ENCODE measurements at regions of chr10 and their contacts with region 1.

Region 1: GRCh38 chr10:4059471-4060138 is 274.6 kb upstream of the KLF6 start:
- DNase-seq: no peak
- ATAC-seq: no peak
- H3K4me3 ChIP-seq: no peak overlapping the region
- H3K27ac ChIP-seq: no peak overlapping the region
- H3K4me1 ChIP-seq: peaks cover 17% of the 10 kb centered on the region
- H3K27me3 ChIP-seq: no peaks in the 10 kb centered on the region
- CTCF ChIP-seq: no peak

Region 2: GRCh38 chr10:4111643-4112042 is 52.0 kb after region 1 on chr10:
- CTCF ChIA-PET with region 1: no interaction called
- POLR2A ChIA-PET with region 1: no interaction called
- intact Hi-C with region 1: loop called (anchors 2 kb)
- DNase-seq: peak; percentile 30
- ATAC-seq: peak; percentile 58
- H3K4me3 ChIP-seq: no peak overlapping the region
- H3K27ac ChIP-seq: no peak overlapping the region
- H3K4me1 ChIP-seq: no peaks in the 10 kb centered on the region
- H3K27me3 ChIP-seq: no peaks in the 10 kb centered on the region
- CTCF ChIP-seq: no peak